Psoas muscle (tissue), 8 donors: ENCODE measurements at regions of chr9 and their contacts with region 1.

Region 1: DNA sequence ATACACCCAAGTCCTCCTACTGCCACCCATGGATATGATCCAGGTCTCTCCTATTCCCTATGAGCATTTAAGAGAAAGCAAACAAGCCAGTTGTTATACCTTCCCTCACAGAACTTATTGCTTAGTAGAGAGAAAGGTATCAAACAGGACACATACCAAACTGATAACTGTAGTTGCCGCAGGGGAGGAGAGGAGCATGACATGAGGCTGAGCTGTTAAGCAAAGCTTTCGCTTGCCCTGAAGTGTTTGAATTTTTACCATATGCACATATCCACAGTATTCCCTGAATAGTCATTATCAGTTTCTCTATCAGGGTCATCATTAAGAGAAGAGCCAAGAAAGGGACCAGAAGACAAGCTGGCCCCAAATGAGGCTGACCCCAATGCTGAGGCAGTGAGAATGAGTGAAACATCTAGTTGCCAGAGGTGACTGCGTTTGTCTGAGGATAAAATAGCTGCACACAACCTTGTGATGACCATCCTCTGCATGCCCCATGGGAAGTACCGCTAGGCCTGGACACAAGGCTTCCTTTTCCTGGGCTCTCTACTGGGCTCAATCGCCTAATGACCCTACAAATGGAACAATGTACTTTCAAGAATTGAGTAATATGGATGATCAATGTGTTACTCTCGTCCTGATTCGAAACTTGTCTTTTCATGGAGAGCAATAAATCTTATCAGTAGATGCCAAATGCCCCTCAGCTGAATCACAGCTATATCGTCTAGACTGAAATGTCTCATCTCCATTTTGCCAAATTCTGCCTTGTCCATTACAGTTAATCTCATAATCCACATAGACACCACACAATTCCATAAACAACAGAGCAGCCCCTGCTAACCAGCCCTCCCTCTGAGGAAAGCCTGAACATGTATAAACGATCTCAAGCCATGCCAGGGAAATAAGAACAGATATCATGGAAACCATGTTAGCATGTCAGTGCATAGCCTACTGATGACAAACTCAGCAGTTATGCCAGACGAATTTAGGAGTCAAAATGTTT is 4.3 kb upstream of the IFNK start:
- DNase-seq: no peak
- ATAC-seq: no peak
- H3K4me3 ChIP-seq: no peak overlapping the region
- H3K27ac ChIP-seq: no peak overlapping the region
- H3K4me1 ChIP-seq: no peaks in the 10 kb centered on the region
- H3K27me3 ChIP-seq: no peaks in the 10 kb centered on the region
- CTCF ChIP-seq: no peak

Region 2: DNA sequence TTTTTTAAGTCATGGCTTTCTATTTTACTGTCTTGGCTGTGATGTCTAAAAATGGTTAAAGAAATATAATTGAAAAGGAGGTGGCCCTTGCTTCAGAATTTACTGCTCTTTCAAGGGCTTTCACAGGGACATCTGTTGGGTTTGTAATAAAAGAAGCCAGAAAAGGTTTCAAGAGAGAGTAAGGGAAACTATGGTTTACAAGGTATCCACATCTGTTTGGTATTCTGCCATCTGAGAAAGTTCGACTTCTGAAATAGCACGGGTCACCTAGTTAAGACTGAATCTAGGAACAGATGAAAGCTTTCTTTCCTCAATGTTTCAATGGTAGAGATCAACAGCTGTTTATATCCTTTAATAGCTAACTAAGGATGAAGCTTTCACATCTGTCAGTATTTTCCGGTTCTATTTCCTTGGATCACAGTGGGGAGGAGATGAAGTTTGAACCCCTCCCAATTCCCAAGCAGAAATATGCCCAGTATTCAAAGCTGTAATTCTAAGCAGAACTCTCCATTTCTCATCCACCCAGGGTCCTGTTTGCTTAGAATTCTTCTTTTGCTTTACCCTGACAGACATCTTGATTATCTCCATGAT is 68.5 kb before region 1 on chr9:
- intact Hi-C with region 1: loop called in 1 of 2 experiments (anchors 5 kb)
- DNase-seq: no peak
- ATAC-seq: no peak
- H3K4me3 ChIP-seq: no peak overlapping the region
- H3K27ac ChIP-seq: no peak overlapping the region
- H3K4me1 ChIP-seq: peaks cover 2% of the 10 kb centered on the region
- H3K27me3 ChIP-seq: no peaks in the 10 kb centered on the region
- CTCF ChIP-seq: no peak

Region 3: GRCh38 chr9:27586304-27586703 is 66.5 kb after region 1 on chr9:
- intact Hi-C with region 1: no loop called
- DNase-seq: no peak
- ATAC-seq: no peak
- H3K4me3 ChIP-seq: no peak overlapping the region
- H3K27ac ChIP-seq: no peak overlapping the region
- H3K4me1 ChIP-seq: no peaks in the 10 kb centered on the region
- H3K27me3 ChIP-seq: peaks cover 2 to 7% (median 2%) of the 10 kb centered on the region in 3 donors
- CTCF ChIP-seq: no peak